H1 (cell line): ENCODE measurements at regions of chr15 and their contacts with region 1.

Region 1: GRCh38 chr15:84658080-84658787 is at the start of gene NMB:
- DNase-seq: peak; percentile 77 to 89
- H3K4me3 ChIP-seq: peak within 1 kb of the TSS; percentile 56 to 74 (median 62)
- H3K27ac ChIP-seq: peak within 1 kb of the TSS; percentile 49; the same call in 1 of the 2 replicates
- H3K4me1 ChIP-seq: peaks cover 0 to 21% (median 14%) of the 10 kb centered on the region in 4 experiments; a peak in 6 of 7 replicates
- H3K27me3 ChIP-seq: peaks cover 0 to 13% (median 9%) of the 10 kb centered on the region in 4 experiments; a peak in 5 of 7 replicates
- CTCF ChIP-seq: peak; percentile 62 to 98 (median 62)
- EP300 ChIP-seq: no peak
- POLR2A ChIP-seq: peak; percentile 55 to 80
- RAD21 ChIP-seq: peak; percentile 43 to 63; a peak in 3 of 4 replicates
- total RNA-seq, gene NMB: 9.3 and 12.4 TPM in 2 replicates

Region 2: DNA sequence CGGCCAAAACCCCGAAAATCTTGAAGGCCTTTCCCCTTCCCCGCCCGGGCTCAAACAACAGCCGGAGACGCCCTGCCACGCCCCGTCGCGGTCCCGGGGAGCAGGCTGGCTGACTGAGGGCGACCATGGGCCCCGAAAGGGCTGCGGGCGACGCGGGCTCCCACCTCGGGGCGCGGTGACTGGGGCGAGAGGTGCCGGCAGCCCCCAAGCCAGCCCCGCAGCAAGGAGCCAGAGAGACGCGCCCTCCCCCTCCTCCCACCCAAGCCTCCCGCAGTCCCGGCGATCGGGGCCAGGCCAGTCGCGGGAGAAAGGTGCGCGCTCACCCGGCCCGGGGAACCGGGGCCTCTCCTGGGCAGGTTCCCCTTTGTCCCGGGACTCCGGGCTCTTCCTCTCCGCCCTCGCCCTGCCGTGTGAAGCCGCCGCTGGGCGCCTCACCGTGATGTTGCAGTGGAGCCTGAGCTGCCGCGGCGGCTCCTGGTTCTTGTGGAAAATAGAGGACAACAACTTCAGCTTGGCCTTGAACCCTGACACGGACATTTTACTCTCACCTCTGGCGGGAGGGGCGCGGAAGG is 88.0 kb before region 1 on chr15:
- CTCF ChIA-PET with region 1: interaction called, 15 read pairs
- POLR2A ChIA-PET with region 1: no interaction called
- DNase-seq: no peak
- H3K4me3 ChIP-seq: peak overlapping the region; percentile 60 to 87 (median 68)
- H3K27ac ChIP-seq: 0 out of 2 replicates have a peak overlapping the region, but pooled peaks have one; percentile 4
- H3K4me1 ChIP-seq: peaks cover 0 to 3% (median 0%) of the 10 kb centered on the region in 4 experiments; a peak in 1 of 7 replicates
- H3K27me3 ChIP-seq: peaks cover 0 to 3% (median 0%) of the 10 kb centered on the region in 4 experiments; a peak in 1 of 7 replicates
- CTCF ChIP-seq: no peak
- EP300 ChIP-seq: no peak
- POLR2A ChIP-seq: no peak
- RAD21 ChIP-seq: no peak

Region 3: GRCh38 chr15:84588053-84588874 is 70.0 kb before region 1 on chr15:
- CTCF ChIA-PET with region 1: interaction called, 86 read pairs
- POLR2A ChIA-PET with region 1: interaction called, 6 read pairs
- DNase-seq: peak; percentile 70 to 94
- H3K4me3 ChIP-seq: peak overlapping the region in 2 of 4 experiments; percentile 10 to 46; a peak in 4 of 8 replicates
- H3K27ac ChIP-seq: no peak overlapping the region
- H3K4me1 ChIP-seq: peaks cover 0 to 11% (median 0%) of the 10 kb centered on the region in 4 experiments; a peak in 2 of 7 replicates
- H3K27me3 ChIP-seq: no peaks in the 10 kb centered on the region
- CTCF ChIP-seq: peak; percentile 67 to 87 (median 82)
- EP300 ChIP-seq: no peak
- POLR2A ChIP-seq: no peak
- RAD21 ChIP-seq: peak; percentile 86 to 87

Region 4: GRCh38 chr15:84600851-84601838 is 57.1 kb before region 1 on chr15 and contains the start of gene ZSCAN2:
- CTCF ChIA-PET with region 1: interaction called, 50 read pairs
- POLR2A ChIA-PET with region 1: interaction called, 14 read pairs
- DNase-seq: peak; percentile 89 to 98
- H3K4me3 ChIP-seq: peak within 1 kb of the TSS; percentile 56 to 90 (median 86)
- H3K27ac ChIP-seq: peak within 1 kb of the TSS; percentile 67; the same call in 1 of the 2 replicates
- H3K4me1 ChIP-seq: peaks cover 7 to 24% (median 15%) of the 10 kb centered on the region in 4 experiments
- H3K27me3 ChIP-seq: peaks cover 0 to 3% (median 0%) of the 10 kb centered on the region in 4 experiments; a peak in 4 of 7 replicates
- CTCF ChIP-seq: no peak
- EP300 ChIP-seq: no peak; a peak in 1 of 3 replicates
- POLR2A ChIP-seq: peak in 1 of 2 experiments; percentile 70; a peak in 2 of 3 replicates
- RAD21 ChIP-seq: no peak
- total RNA-seq, gene ZSCAN2: 37.3 and 52.4 TPM in 2 replicates

Region 5: GRCh38 chr15:84716036-84716799 is 58.0 kb after region 1 on chr15 and contains the start of gene SEC11A:
- CTCF ChIA-PET with region 1: interaction called, 6 read pairs
- POLR2A ChIA-PET with region 1: interaction called, 10 read pairs
- DNase-seq: peak; percentile 78 to 97
- H3K4me3 ChIP-seq: peak within 1 kb of the TSS; percentile 88 to 95 (median 90)
- H3K27ac ChIP-seq: peak within 1 kb of the TSS; percentile 85
- H3K4me1 ChIP-seq: peaks cover 0 to 8% (median 1%) of the 10 kb centered on the region in 4 experiments; a peak in 3 of 7 replicates
- H3K27me3 ChIP-seq: no peaks in the 10 kb centered on the region
- CTCF ChIP-seq: no peak
- EP300 ChIP-seq: no peak
- POLR2A ChIP-seq: peak; percentile 82 to 96
- RAD21 ChIP-seq: no peak
- total RNA-seq, gene SEC11A: 250 and 268 TPM in 2 replicates